K562 (cell line): ENCODE measurements at regions of chr22 and their contacts with region 1.

Region 1: GRCh38 chr22:35231585-35232084 is 25.7 kb upstream of the HMGXB4 start:
- DNase-seq: peak; percentile 66 to 89 (median 69)
- ATAC-seq: peak; percentile 86
- H3K4me3 ChIP-seq: peak overlapping the region; percentile 65; the same call in 1 of the 2 replicates
- H3K27ac ChIP-seq: no peak overlapping the region
- H3K4me1 ChIP-seq: peaks cover 9 to 26% of the 10 kb centered on the region in 2 experiments; a peak in 3 of 5 replicates
- H3K27me3 ChIP-seq: no peaks in the 10 kb centered on the region
- CTCF ChIP-seq: peak; percentile 92 to 98 (median 93)
- EP300 ChIP-seq: no peak
- POLR2A ChIP-seq: no peak
- RAD21 ChIP-seq: peak; percentile 68 to 82

Region 2: DNA sequence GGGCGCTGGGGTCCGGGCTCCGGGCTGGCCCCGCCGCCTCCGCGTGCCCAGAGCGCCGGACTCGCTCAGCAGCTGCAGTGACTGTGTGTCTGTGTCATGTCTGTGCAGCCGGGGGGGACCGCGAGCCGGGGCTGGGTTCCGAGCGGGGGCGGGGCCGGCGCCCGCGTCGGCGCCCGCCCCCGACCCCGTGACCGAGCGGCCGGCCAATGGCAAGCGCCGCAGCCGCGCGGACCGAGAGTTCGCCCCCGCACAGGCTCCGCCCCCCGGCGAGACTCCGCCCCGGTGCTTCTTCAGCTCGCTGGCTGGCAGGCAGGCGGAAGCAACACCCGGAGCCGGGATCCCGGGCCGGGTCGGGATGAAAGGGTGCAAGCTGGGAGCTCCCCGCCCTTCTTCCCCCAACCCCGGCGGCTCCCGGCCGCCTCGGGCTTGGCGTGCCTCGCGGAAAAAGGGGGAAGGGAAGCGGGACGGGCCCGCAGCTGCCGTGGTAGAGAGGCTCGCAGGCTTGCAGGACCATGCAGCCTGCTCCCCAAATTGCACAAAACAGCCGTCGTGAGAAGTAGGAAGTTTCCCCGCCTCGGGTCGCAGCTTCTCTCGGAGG is 1310.6 kb before region 1 on chr22:
- CTCF ChIA-PET with region 1: no interaction called
- POLR2A ChIA-PET with region 1: no interaction called
- in situ Hi-C with region 1: no loop called
- intact Hi-C with region 1: loop called (anchors 5 kb)
- DNase-seq: peak; percentile 85 to 92 (median 90)
- ATAC-seq: peak; percentile 100
- H3K4me3 ChIP-seq: peak overlapping the region; percentile 19; the same call in 1 of the 2 replicates
- H3K27ac ChIP-seq: no peak overlapping the region
- H3K4me1 ChIP-seq: peaks cover 0 to 17% of the 10 kb centered on the region in 2 experiments; a peak in 2 of 5 replicates
- H3K27me3 ChIP-seq: no peaks in the 10 kb centered on the region
- CTCF ChIP-seq: no peak
- EP300 ChIP-seq: no peak
- POLR2A ChIP-seq: no peak
- RAD21 ChIP-seq: no peak

Region 3: DNA sequence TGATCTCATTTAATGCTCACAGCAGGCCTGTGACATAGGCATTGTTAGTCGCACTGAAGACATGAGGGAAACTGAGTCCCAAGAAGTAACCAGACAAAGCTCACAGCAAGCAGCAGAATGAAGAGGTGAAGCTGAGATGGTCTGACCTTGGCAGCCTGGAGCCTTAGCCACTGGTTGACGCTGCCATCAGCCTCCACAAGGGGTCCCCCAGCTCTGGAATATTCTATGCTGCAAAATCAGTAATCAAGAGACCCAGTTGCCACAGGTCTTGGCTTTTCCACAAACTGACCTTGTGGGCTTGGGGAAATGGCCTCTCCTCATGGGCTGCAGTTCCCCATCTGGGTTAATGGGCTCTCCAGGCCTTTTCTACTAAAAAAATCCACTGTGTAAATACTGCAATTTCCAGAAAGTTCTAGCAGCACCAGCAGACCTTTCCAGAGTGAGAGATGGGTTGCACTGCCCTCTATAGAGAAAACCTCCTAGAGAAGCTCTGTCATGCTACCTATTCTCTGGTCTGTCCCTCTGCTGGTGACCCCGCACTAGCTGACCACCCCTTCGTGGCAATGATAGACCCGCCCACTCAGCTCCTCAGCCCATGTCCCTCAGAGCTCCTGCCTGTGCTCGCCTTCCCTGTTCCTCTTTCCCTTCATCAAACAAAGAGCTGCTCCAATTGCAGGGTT is 188.2 kb before region 1 on chr22:
- CTCF ChIA-PET with region 1: interaction called, 3 read pairs
- POLR2A ChIA-PET with region 1: interaction called, 3 read pairs
- in situ Hi-C with region 1: loop called (anchors 10 kb)
- intact Hi-C with region 1: loop called (anchors 5 kb)
- DNase-seq: peak; percentile 22 to 50 (median 32)
- ATAC-seq: peak; percentile 94
- H3K4me3 ChIP-seq: no peak overlapping the region
- H3K27ac ChIP-seq: no peak overlapping the region
- H3K4me1 ChIP-seq: no peaks in the 10 kb centered on the region
- H3K27me3 ChIP-seq: no peaks in the 10 kb centered on the region; a peak in 1 of 5 replicates
- CTCF ChIP-seq: peak; percentile 39 to 59 (median 50); a peak in 5 of 6 replicates
- EP300 ChIP-seq: no peak
- POLR2A ChIP-seq: no peak
- RAD21 ChIP-seq: peak; percentile 28 to 71; a peak in 3 of 4 replicates

Region 4: DNA sequence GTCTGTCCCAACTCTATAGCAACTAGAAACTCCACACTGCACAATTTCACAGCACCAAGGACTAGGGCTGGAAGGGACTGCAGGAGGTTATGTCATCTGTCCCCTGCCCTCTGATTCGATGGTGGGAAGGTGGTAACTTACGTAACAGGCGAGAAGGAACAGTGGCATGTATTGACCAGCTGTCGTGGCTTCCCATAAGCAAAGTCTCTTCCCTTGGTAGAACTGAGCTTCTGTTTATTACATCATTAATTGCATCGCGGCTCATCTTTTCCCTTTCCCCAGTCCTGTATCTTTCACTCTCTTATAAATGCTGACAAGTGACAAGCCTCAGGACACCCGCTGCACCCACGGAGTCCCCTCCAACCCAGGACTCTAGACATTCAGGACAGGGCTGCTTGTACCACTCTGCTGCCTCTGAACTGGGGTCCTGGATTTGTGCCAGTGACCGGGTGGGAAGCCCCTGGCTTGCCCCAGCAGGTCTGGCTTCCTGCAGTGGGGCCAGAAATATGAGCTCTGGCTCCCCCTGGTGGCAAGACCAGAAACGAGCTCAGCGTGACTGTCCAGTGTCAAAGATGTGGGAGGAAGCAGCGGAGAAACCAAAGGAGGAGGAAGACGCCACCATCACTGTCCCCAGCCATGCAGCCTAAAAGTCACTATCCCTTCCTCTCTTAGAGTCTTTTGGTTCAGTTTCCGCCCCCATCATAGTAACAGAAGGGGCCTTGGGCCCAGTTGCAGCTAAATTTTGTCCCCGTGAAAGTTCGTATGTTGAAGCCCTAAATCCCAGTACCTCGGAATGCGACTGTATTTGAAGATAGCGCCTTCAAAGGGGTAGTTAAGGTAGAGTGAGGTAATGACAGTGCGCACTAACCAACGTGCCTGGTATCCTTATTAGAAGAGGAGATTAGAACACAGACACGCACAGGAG is 81.2 kb before region 1 on chr22:
- CTCF ChIA-PET with region 1: interaction called, 4 read pairs
- POLR2A ChIA-PET with region 1: interaction called, 5 read pairs
- in situ Hi-C with region 1: loop called (anchors 10 kb)
- intact Hi-C with region 1: loop called (anchors 1 kb)
- DNase-seq: peak; percentile 41 to 72 (median 54)
- ATAC-seq: peak; percentile 93
- H3K4me3 ChIP-seq: no peak overlapping the region
- H3K27ac ChIP-seq: no peak overlapping the region
- H3K4me1 ChIP-seq: peaks cover 0 to 2% of the 10 kb centered on the region in 2 experiments; a peak in 3 of 5 replicates
- H3K27me3 ChIP-seq: no peaks in the 10 kb centered on the region
- CTCF ChIP-seq: peak; percentile 71 to 81 (median 71)
- EP300 ChIP-seq: no peak
- POLR2A ChIP-seq: no peak
- RAD21 ChIP-seq: peak; percentile 41 to 71

Region 5: DNA sequence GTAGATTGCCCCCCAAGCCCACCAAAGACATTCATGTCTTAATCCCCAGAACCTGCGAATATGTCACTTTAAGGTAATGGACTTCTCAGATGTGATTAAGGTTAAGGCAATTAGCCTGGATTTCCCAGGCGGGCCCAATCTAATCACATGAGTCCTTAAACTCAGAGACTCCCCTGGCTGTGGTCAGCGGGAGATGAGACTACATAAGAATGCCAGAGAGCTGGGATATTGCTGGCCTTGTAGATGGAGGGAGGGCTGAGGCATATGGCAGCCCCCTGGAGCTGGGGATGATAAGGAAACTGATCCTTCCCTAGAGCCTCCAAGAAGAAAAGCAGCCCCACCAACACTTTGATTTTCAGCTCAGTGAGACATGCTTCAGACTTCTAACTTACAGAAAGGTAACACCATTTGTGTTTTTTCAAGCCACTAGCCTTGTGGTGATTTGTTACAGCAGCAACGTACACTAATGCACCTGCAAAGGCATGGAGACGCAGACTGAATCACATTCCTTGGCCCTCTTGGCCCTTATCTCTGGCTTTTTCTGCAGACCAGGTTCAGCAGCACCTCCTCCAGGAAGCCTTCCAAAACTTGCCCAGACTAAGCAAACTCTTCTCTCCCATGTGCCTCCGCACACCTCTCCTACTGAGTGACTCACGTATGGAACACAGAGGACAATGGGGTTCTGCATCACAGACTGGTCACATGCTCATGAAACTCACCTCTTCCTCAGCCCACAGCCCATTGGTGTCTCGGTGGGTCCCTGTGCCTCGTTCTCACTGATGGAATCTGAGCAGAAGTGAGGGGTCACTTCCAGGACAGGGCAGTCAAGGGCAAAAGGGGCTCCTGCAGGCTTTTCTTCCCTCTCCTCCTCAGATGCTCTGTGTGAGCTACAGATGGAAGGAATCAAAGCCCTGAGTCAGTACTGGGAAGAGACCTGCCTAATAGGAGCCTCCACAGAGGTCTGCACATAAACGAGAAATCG is 60.6 kb before region 1 on chr22:
- CTCF ChIA-PET with region 1: interaction called, 17 read pairs
- POLR2A ChIA-PET with region 1: interaction called, 7 read pairs
- in situ Hi-C with region 1: no loop called
- intact Hi-C with region 1: loop called (anchors 1 kb)
- DNase-seq: peak; percentile 18 to 45 (median 37)
- ATAC-seq: peak; percentile 87
- H3K4me3 ChIP-seq: no peak overlapping the region
- H3K27ac ChIP-seq: no peak overlapping the region
- H3K4me1 ChIP-seq: no peaks in the 10 kb centered on the region
- H3K27me3 ChIP-seq: no peaks in the 10 kb centered on the region
- CTCF ChIP-seq: peak; percentile 46 to 64 (median 63)
- EP300 ChIP-seq: no peak
- POLR2A ChIP-seq: no peak
- RAD21 ChIP-seq: peak; percentile 24 to 65; a peak in 3 of 4 replicates

Region 6: DNA sequence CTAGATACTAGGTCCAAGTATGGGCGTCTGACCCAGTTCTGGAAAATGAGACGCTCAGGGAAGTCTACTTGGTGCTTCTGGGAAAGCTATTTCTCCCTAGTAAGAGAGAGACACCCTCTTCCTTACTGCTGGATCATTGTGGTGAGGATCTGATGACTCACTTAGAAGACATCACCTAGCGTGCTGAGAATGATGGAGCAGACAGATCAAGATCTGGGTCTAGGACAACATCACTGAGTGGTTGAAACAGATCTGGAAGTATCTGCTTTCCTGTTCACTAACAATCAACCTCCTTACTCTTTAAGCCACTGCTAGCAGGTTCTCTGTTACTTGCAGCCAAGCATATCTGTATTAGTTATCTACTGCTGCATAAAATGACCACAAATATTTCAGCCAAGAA is 12.6 kb before region 1 on chr22:
- CTCF ChIA-PET with region 1: no interaction called
- POLR2A ChIA-PET with region 1: interaction called, 24 read pairs
- in situ Hi-C with region 1: no loop called
- intact Hi-C with region 1: no loop called
- DNase-seq: peak; percentile 49 to 57 (median 55)
- ATAC-seq: peak; percentile 78
- H3K4me3 ChIP-seq: no peak overlapping the region
- H3K27ac ChIP-seq: 0 out of 3 replicates have a peak overlapping the region, but pooled peaks have one; percentile 54
- H3K4me1 ChIP-seq: peaks cover 0 to 27% of the 10 kb centered on the region in 2 experiments; a peak in 4 of 5 replicates
- H3K27me3 ChIP-seq: no peaks in the 10 kb centered on the region
- CTCF ChIP-seq: no peak
- EP300 ChIP-seq: no peak; the same call in 1 of the 2 replicates
- POLR2A ChIP-seq: no peak
- RAD21 ChIP-seq: no peak